ENCODE measurements at regions of chr3 and their contacts with region 1.

Region 1: DNA sequence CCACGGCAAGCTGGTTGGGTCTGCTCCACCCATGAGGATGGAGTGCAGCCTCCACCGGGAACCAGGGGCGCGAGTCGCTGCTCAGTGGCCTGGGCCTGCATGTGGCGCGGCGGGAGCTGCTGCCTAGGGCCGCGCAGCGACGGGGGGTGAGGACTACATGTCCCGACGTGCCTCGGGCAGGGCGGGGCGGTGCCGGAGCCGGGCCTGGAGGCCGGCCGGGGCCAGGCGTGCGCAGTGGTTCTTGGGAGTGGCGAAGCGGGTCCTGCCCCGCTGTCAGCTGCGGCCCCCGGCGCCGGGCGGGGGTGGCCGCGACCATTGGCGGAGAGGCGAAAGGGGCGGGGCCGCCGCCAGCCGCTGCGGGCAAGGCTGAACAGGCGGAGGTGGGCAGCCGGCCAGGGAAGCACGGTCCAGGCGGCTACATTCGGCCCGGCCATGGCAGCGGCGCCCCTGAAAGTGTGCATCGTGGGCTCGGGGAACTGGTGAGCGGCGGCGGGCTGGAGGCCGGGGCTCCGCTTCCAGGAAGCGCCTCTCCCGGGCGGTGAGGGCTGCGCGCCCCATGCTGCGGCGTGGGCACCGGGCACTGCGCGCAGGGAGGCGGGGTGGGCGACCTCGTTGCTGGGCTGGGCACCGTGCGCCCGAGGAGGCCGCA is at the start of gene GPD1L:
- DNase-seq: peak; percentile 75
- H3K4me3 ChIP-seq: peak within 1 kb of the TSS; percentile 63
- CTCF ChIP-seq: no peak

Region 2: GRCh38 chr3:31925271-31925630 is 181.2 kb before region 1 on chr3:
- in situ Hi-C with region 1: no loop called
- DNase-seq: no peak
- H3K4me3 ChIP-seq: no peak overlapping the region
- CTCF ChIP-seq: no peak

Region 3: GRCh38 chr3:31981206-31982181 is 124.9 kb before region 1 on chr3 and contains the starts of genes OSBPL10 and ZNF860:
- in situ Hi-C with region 1: no loop called
- DNase-seq: peak; percentile 74
- H3K4me3 ChIP-seq: peak within 1 kb of the TSS; percentile 51
- CTCF ChIP-seq: no peak

Region 4: DNA sequence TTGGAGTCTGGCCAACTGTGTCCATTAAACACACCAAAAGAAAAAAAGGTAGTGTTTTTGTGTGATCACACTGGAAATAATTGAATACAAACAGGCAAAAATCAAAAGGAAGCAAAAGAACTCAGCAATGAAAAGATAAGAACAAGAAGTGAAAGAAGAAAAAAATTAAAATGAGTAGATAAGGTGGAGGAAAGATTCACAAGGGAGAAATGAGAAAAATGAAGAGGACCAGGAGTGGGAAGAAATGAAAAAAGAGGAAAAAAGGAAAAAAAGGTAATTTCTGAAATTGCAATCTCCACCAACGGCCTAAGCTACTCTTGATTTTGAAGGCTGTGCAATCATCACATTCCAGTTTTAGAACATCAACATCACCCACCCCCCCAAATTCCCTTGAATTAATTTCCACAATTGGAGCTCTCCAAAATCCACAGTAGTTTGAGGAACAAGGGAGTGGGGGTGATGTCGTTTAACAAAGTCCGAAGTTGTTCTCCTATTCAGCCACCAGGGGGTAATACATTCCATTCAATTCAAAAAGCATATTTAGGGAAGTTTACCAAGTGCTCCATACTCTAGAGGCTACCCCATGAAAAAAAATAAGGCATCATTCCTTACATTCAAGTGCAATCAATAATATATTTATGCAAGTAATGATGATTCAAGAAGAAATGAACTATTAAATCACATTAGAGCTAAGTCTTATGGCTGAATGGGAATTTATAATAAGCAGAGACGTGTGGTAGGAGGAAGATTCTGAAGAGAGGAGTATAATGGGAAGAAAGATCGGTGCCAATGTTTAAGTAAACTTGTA is 87.4 kb before region 1 on chr3:
- in situ Hi-C with region 1: loop called (anchors 10 kb)
- DNase-seq: peak; percentile 32
- H3K4me3 ChIP-seq: no peak overlapping the region
- CTCF ChIP-seq: peak; percentile 63

Region 5: DNA sequence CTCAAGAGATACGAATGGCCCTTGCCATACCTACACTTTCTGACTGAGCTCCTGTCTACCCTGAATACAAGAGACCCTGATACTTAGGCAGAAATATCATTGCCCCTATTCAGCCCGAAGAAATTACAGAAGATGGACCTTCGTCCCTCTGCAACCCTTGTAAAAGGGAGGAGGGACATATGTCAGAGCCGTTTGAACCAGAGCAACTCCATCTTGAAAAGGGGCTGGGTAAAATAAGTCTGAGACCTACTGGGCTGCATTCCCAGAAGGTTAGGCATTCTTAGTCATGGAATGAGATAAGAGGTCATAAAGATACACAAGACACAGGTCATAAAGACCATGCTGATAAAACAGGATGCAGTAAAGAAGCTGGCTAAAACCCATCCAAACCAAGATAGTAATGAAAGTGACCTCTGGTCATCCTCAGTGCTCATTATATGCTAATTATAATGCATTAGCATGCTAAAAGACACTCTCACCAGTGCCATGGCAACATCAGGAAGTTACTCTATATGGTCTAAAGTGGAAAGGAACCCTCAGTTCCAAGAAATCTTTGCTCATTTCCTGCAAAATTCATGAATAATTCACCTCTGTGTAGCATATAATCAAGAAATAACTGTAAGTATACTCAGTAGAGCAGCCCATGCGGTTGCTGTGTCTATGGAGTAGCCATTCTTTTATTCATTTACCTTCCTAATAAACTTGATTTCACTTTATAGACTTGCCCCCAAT is 49.7 kb before region 1 on chr3:
- in situ Hi-C with region 1: no loop called
- DNase-seq: no peak
- H3K4me3 ChIP-seq: no peak overlapping the region
- CTCF ChIP-seq: no peak

Region 6: GRCh38 chr3:32166654-32167053 is 60.2 kb after region 1 on chr3:
- in situ Hi-C with region 1: loop called (anchors 10 kb)
- DNase-seq: no peak
- H3K4me3 ChIP-seq: no peak overlapping the region
- CTCF ChIP-seq: no peak

Region 7: DNA sequence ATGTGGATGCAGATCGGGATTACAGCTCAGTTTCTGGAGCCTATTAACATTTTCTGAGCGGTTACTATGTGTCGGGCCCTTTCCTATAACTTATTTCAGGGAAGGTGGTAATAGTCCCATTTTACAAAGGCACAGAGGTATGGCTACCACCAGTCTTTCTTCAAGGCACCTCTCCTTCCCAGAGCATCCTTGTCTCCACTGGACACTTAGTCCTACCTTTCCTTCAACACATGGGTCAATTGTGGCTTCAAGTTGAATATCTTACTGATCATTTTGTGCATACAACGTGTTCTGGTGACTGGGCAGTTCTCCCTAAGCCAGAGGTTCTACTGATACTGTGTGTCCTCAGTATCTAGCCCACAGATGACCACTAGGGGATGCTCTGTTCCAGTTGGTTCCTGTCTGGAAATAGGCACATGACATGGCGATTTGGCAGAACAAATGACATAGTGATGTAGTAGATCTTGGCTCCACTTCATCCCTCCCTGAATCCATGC is 71.3 kb after region 1 on chr3:
- in situ Hi-C with region 1: no loop called
- DNase-seq: peak; percentile 47
- H3K4me3 ChIP-seq: no peak overlapping the region
- CTCF ChIP-seq: peak; percentile 93

Measured in astrocyte of the cerebellum (primary cell).